Ovary (tissue), 10 donors: ENCODE measurements at regions of chr3 and their contacts with region 1.

Region 1: GRCh38 chr3:190120269-190121060 is at the start of gene P3H2:
- DNase-seq: peak; percentile 84 to 91 (median 88)
- H3K4me3 ChIP-seq: peak within 1 kb of the TSS; percentile 75
- H3K27ac ChIP-seq: peak within 1 kb of the TSS; percentile 73 to 85
- H3K4me1 ChIP-seq: peaks cover 8% of the 10 kb centered on the region
- H3K27me3 ChIP-seq: no peaks in the 10 kb centered on the region
- CTCF ChIP-seq: peak in 2 of 3 donors; percentile 54 to 67
- EP300 ChIP-seq: no peak
- POLR2A ChIP-seq: no peak
- total RNA-seq, gene P3H2: 10.6 to 36.2 (median 22.8) TPM

Region 2: GRCh38 chr3:189961525-189962161 is 158.8 kb before region 1 on chr3:
- intact Hi-C with region 1: loop called in 2 of 4 experiments (anchors 2 to 10 kb)
- DNase-seq: peak; percentile 59 to 83 (median 78)
- H3K4me3 ChIP-seq: no peak overlapping the region
- H3K27ac ChIP-seq: no peak overlapping the region
- H3K4me1 ChIP-seq: no peaks in the 10 kb centered on the region
- H3K27me3 ChIP-seq: no peaks in the 10 kb centered on the region
- CTCF ChIP-seq: peak; percentile 80 to 84 (median 84)
- EP300 ChIP-seq: no peak
- POLR2A ChIP-seq: no peak

Region 3: GRCh38 chr3:189967254-189967865 is 153.1 kb before region 1 on chr3:
- intact Hi-C with region 1: loop called in 3 of 4 experiments (anchors 2 to 10 kb)
- DNase-seq: no peak
- H3K4me3 ChIP-seq: no peak overlapping the region
- H3K27ac ChIP-seq: no peak overlapping the region
- H3K4me1 ChIP-seq: no peaks in the 10 kb centered on the region
- H3K27me3 ChIP-seq: peaks cover 2% of the 10 kb centered on the region
- CTCF ChIP-seq: peak; percentile 45 to 84 (median 81)
- EP300 ChIP-seq: no peak
- POLR2A ChIP-seq: no peak

Region 4: GRCh38 chr3:189975391-189975990 is 145.0 kb before region 1 on chr3:
- intact Hi-C with region 1: loop called in 1 of 4 experiments (anchors 10 kb)
- DNase-seq: no peak
- H3K4me3 ChIP-seq: no peak overlapping the region
- H3K27ac ChIP-seq: no peak overlapping the region
- H3K4me1 ChIP-seq: peaks cover 3% of the 10 kb centered on the region
- H3K27me3 ChIP-seq: no peaks in the 10 kb centered on the region
- CTCF ChIP-seq: no peak
- EP300 ChIP-seq: no peak
- POLR2A ChIP-seq: no peak

Region 5: GRCh38 chr3:190064112-190064511 is 56.4 kb before region 1 on chr3:
- intact Hi-C with region 1: no loop called
- DNase-seq: no peak
- H3K4me3 ChIP-seq: no peak overlapping the region
- H3K27ac ChIP-seq: no peak overlapping the region
- H3K4me1 ChIP-seq: peaks cover 4% of the 10 kb centered on the region
- H3K27me3 ChIP-seq: no peaks in the 10 kb centered on the region
- CTCF ChIP-seq: no peak
- EP300 ChIP-seq: no peak
- POLR2A ChIP-seq: no peak

Region 6: DNA sequence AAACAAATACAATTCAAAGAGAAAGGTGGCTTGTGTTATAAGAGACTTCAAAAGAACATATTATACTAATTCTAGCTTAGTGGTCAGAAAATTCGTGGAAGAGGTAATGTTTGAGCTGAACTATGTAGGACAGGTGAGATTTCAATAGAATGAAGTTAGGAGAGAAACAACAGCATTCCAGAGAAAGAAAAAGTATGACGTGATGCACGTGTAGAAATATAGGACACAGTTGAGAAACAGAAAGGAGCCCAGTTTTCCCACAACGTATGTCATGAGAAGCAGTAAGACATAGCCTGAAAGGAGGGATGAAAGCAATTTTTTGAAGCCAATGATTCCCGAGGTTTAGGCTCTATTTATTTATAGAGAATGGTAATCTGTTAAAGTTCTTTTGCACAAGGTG is 18.9 kb after region 1 on chr3:
- intact Hi-C with region 1: no loop called
- DNase-seq: no peak
- H3K4me3 ChIP-seq: no peak overlapping the region
- H3K27ac ChIP-seq: no peak overlapping the region
- H3K4me1 ChIP-seq: no peaks in the 10 kb centered on the region
- H3K27me3 ChIP-seq: no peaks in the 10 kb centered on the region
- CTCF ChIP-seq: no peak
- EP300 ChIP-seq: no peak
- POLR2A ChIP-seq: no peak

Region 7: GRCh38 chr3:190197346-190197763 is 76.9 kb after region 1 on chr3:
- intact Hi-C with region 1: loop called in 2 of 4 experiments (anchors 10 kb)
- DNase-seq: no peak
- H3K4me3 ChIP-seq: no peak overlapping the region
- H3K27ac ChIP-seq: no peak overlapping the region
- H3K4me1 ChIP-seq: no peaks in the 10 kb centered on the region
- H3K27me3 ChIP-seq: no peaks in the 10 kb centered on the region
- CTCF ChIP-seq: no peak
- EP300 ChIP-seq: no peak
- POLR2A ChIP-seq: no peak

Region 8: DNA sequence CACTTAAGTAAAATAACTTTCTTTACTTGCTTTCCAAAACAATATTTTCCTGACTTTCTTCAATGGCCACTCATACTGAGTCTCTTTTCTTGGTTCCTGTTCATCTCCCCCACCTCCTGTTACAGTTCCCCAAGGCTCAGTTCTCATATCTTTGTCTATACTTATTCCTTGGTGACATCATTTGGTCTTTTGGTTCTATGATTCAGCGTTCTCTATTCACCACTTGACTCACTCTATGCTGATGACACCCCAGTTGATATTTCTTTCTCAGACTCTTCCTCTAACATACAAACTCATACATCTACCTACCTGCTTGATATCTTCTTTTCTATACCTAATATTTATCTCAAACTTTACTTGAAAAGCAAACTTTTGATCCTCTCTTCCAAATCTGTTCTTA is 85.3 kb after region 1 on chr3:
- intact Hi-C with region 1: loop called in 1 of 4 experiments (anchors 10 kb)
- DNase-seq: no peak
- H3K4me3 ChIP-seq: no peak overlapping the region
- H3K27ac ChIP-seq: no peak overlapping the region
- H3K4me1 ChIP-seq: no peaks in the 10 kb centered on the region
- H3K27me3 ChIP-seq: no peaks in the 10 kb centered on the region
- CTCF ChIP-seq: no peak
- EP300 ChIP-seq: no peak
- POLR2A ChIP-seq: no peak